PC-9 (cell line): ENCODE measurements at regions of chr6 and their contacts with region 1.

Region 1: GRCh38 chr6:36402481-36402880 is 15.0 kb upstream of the ETV7 start:
- DNase-seq: no peak
- H3K4me3 ChIP-seq: no peak overlapping the region
- H3K27ac ChIP-seq: no peak overlapping the region
- H3K4me1 ChIP-seq: no peaks in the 10 kb centered on the region
- H3K27me3 ChIP-seq: no peaks in the 10 kb centered on the region
- CTCF ChIP-seq: no peak

Region 2: GRCh38 chr6:36360241-36361054 is 42.0 kb before region 1 on chr6:
- CTCF ChIA-PET with region 1: no interaction called
- POLR2A ChIA-PET with region 1: no interaction called
- intact Hi-C with region 1: no loop called
- DNase-seq: peak; percentile 43 to 70
- H3K4me3 ChIP-seq: no peak overlapping the region
- H3K27ac ChIP-seq: no peak overlapping the region
- H3K4me1 ChIP-seq: 0 out of 2 replicates have a peak, but pooled peaks cover 7% of the 10 kb centered on the region
- H3K27me3 ChIP-seq: no peaks in the 10 kb centered on the region
- CTCF ChIP-seq: peak; percentile 90

Region 3: DNA sequence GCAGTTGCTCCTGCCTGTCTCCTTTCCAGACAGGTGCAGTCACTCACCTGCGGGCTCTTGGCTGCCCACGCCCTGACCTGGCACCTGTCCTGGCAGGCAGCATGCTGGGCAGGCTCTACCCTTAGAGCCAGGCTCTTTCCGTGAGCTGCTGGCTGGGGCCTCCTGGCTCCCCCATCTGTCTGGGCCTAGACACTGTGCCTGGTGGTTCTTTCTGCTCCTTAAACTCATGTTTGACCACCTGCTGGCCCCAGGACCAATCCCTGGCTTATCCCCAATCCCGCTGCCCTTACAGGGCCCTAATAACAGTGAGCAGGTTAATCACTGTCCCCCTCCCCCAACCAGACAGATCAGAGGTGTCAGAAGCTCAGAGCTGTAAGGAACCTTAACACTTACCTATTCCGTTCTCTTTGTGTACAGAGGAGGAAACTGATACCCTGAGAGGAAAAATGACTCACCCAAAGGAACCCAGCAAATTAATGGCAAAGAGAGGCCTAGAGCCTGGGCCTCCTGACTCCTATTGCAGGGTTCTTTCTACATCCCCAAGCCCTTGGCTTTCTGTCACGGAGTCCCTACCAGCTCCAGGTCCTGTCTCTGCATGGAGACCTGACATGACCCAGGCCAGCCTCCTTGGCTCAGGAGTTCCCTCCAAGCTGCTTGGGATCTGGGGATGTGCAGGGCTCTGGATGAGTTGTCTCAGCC is 349.9 kb after region 1 on chr6:
- CTCF ChIA-PET with region 1: no interaction called
- POLR2A ChIA-PET with region 1: interaction called, 22 read pairs
- intact Hi-C with region 1: no loop called
- DNase-seq: peak; percentile 64 to 86
- H3K4me3 ChIP-seq: no peak overlapping the region
- H3K27ac ChIP-seq: peak overlapping the region; percentile 60
- H3K4me1 ChIP-seq: peaks cover 60% of the 10 kb centered on the region
- H3K27me3 ChIP-seq: no peaks in the 10 kb centered on the region
- CTCF ChIP-seq: no peak